ENCODE measurements at regions of chr11 and their contacts with region 1.

Region 1: DNA sequence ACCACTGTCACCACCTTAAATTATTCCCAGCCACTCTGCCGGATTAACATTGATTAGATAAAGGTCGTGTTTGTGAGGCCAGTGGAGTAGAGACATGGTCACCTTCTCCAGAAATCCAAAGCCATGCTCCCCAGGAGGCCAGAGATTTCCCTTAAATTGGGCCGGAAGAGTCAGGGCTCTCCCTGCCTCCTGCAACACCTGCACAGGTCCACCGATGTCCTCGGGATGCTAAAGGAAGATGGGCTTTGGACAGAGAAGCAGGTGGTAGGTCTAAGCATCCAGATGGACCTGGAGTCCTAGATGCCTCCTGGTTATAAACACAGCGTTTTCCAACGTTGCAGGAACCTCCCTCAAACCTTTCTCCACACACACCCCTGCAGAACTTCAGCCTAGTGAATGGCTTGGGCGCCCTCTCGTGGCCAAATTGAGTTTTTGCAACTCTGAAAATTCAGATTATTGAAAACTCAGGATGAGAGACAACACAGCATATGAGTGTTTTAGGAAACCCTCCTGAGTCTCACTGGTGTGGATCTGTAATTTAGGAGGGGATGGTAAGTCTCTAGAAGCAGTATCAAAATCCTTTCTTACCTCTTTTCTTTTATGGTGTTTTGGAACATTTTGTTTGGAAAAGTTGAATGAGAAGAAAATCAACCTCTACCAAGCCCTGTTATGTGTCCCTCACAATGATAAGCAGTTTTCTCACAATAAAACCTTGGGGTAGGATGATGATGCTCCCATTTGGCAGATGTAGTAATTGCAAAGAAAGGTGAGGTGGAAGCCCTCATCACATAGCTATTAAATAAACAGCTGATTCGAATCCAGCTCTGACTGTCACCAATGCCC is 109.6 kb downstream of the RRAS2 start:
- DNase-seq: peak; percentile 41 to 88 (median 75)

Region 2: DNA sequence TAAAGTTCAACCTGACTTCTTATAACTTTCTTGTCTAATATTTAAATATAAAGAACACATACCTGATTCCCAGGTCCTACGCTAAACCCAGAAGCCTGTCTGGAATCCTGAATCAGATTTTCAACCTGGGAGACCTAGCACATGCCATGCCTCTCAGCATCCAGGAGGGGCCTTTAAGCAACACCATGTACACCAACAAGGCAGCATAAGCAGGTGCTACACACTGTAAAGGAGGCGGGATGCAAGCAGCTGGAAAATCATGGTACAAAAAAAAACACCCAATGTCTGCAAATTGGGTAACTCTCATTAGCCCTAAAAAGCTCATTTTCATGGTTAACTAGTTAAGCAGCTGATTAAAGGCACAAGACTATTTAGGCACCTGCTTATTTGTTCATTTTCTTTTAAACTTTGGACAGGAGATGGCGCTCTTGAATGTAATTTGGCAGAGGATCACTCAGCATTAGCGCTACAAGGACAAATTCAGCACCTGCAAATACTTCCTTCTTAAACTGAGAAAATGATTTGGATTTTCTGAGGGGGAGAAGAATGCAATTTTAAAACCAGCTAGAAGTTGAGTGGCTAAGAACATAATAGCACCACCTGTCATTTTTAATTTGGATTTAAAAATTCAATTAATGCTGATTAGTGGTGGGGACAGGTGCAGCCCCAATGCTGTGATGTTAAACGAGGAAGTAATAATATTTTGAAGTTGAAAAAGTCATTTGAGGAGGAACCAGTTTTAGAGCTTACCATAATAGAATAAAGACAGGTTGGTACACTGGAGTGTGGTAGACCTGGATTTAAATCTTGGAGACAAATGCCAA is 476.9 kb before region 1 on chr11:
- intact Hi-C with region 1: loop called (anchors 5 kb)
- DNase-seq: peak in 13 of 42 donors; percentile 15 to 69 (median 42)

Region 3: GRCh38 chr11:14269692-14270573 is 20.6 kb after region 1 on chr11:
- intact Hi-C with region 1: no loop called
- DNase-seq: no peak

Measured in head of caudate nucleus (tissue), 42 donors.